Activated CD8-positive, alpha-beta T cell treated with anti-CD3 and anti-CD28 coated beads for 36 hours (primary cell): ENCODE measurements at regions of chr15 and their contacts with region 1.

Region 1: GRCh38 chr15:101201406-101202174 is 50.3 kb downstream of the CHSY1 start:
- DNase-seq: peak; percentile 44
- ATAC-seq: no peak
- H3K4me3 Mint-ChIP-seq: peak overlapping the region; percentile 19
- H3K27ac Mint-ChIP-seq: peak overlapping the region; percentile 96
- H3K4me1 Mint-ChIP-seq: peaks cover 92% of the 10 kb centered on the region
- H3K27me3 Mint-ChIP-seq: no peaks in the 10 kb centered on the region
- CTCF ChIP-seq: no peak

Region 2: DNA sequence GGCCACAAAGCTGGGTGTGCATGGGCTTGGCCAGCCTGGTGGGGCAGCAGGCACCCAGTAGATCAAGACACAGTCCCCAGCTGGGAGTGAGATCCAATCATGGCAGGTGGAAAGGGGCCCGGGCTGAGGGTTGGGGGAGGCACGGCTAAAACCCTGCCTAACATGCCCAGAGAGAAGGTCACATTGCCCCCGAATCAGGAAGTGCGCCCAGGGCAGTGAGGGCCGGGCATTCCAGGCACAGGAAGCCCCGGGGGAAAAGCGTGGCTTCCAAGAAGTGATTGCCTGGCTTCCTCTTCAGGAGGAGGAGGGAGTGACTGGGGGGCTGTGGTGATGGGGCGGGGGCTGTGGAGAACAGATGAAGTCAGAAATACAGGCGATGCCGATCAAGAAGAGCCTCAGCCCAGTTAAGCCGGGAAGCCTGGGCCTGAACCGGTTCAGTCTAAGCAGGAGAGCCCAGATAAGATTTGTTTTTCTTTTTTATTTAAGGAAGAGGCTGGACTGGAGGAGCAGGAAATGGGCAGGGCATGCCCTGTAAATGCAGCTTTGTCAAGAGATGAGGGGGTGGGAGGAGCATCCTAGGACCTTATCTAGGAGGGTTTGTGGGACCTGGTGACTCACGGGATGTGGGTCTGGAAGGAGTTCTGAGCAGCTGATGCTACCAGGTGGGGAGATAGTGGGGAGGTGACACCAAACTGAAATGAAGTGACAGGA is 33.7 kb before region 1 on chr15:
- CTCF ChIA-PET with region 1: interaction called, 3 read pairs
- POLR2A ChIA-PET with region 1: no interaction called
- intact Hi-C with region 1: loop called (anchors 5 kb)
- DNase-seq: peak; percentile 90
- ATAC-seq: peak; percentile 95
- H3K4me3 Mint-ChIP-seq: peak overlapping the region; percentile 58
- H3K27ac Mint-ChIP-seq: peak overlapping the region; percentile 86
- H3K4me1 Mint-ChIP-seq: peaks cover 26% of the 10 kb centered on the region
- H3K27me3 Mint-ChIP-seq: no peaks in the 10 kb centered on the region
- CTCF ChIP-seq: no peak

Region 3: GRCh38 chr15:101188637-101189408 is 12.8 kb before region 1 on chr15:
- CTCF ChIA-PET with region 1: interaction called, 13 read pairs
- POLR2A ChIA-PET with region 1: interaction called, 13 read pairs
- intact Hi-C with region 1: loop called (anchors 2 kb)
- DNase-seq: no peak
- ATAC-seq: peak; percentile 70
- H3K4me3 Mint-ChIP-seq: peak overlapping the region; percentile 18
- H3K27ac Mint-ChIP-seq: peak overlapping the region; percentile 84
- H3K4me1 Mint-ChIP-seq: peaks cover 90% of the 10 kb centered on the region
- H3K27me3 Mint-ChIP-seq: no peaks in the 10 kb centered on the region
- CTCF ChIP-seq: no peak

Region 4: DNA sequence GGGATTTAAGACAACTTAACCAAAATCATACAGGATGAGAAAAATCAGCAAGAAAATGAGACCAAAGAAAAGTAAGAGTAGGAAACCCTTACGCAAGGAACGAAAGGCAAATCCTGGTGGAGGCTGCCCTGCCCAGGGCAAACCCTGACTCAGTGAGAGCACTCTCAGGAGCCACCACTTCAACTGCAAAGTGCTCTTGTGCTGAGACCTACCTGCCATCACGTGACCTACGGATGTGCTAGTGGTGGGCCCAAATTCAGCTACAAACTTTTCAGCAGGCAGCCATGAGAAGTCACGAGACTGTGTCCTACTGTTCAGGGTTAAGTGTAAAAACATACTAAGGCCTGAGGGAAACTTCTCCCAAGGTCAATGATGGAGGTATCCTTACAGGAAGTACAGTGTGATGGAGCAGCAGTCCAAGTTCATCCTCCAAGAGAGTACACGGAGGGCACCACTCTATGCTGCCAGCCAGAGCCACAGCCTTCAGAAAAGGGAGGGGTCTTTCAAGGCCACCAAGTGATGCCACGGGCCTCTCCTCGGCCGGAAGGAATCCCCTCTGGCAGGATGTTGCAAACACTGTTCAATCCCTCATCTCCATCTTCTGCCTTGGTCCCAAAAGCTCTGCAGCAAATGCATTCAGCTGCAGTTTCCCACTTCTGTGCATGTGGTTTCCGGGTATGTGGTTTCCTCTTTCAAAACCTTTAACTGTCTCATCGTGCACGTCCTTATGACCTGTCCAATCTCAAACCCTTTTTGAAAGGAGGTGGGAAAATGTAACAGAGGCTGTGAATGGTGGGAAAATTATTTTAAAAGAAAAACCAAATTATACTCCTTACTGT is 40.8 kb after region 1 on chr15:
- CTCF ChIA-PET with region 1: interaction called, 11 read pairs
- POLR2A ChIA-PET with region 1: interaction called, 8 read pairs
- intact Hi-C with region 1: loop called (anchors 5 kb)
- DNase-seq: peak; percentile 82
- ATAC-seq: peak; percentile 76
- H3K4me3 Mint-ChIP-seq: peak overlapping the region; percentile 37
- H3K27ac Mint-ChIP-seq: peak overlapping the region; percentile 85
- H3K4me1 Mint-ChIP-seq: peaks cover 87% of the 10 kb centered on the region
- H3K27me3 Mint-ChIP-seq: no peaks in the 10 kb centered on the region
- CTCF ChIP-seq: no peak

Region 5: GRCh38 chr15:101251830-101252820 is 50.5 kb after region 1 on chr15 and contains the start of gene CHSY1:
- CTCF ChIA-PET with region 1: interaction called, 11 read pairs
- POLR2A ChIA-PET with region 1: interaction called, 17 read pairs
- intact Hi-C with region 1: no loop called
- DNase-seq: peak; percentile 91
- ATAC-seq: peak; percentile 75
- H3K4me3 Mint-ChIP-seq: peak within 1 kb of the TSS; percentile 85
- H3K27ac Mint-ChIP-seq: peak within 1 kb of the TSS; percentile 87
- H3K4me1 Mint-ChIP-seq: peaks cover 59% of the 10 kb centered on the region
- H3K27me3 Mint-ChIP-seq: no peaks in the 10 kb centered on the region
- CTCF ChIP-seq: no peak
- total RNA-seq, gene CHSY1: 57.9 to 58.3 TPM

Region 6: GRCh38 chr15:101568309-101568708 is 366.7 kb after region 1 on chr15:
- CTCF ChIA-PET with region 1: no interaction called
- POLR2A ChIA-PET with region 1: no interaction called
- intact Hi-C with region 1: no loop called
- DNase-seq: no peak
- ATAC-seq: no peak
- H3K4me3 Mint-ChIP-seq: no peak overlapping the region
- H3K27ac Mint-ChIP-seq: no peak overlapping the region
- H3K4me1 Mint-ChIP-seq: no peaks in the 10 kb centered on the region
- H3K27me3 Mint-ChIP-seq: peaks cover 14% of the 10 kb centered on the region
- CTCF ChIP-seq: no peak

Region 7: GRCh38 chr15:101807345-101807945 is 605.9 kb after region 1 on chr15:
- CTCF ChIA-PET with region 1: no interaction called
- POLR2A ChIA-PET with region 1: no interaction called
- intact Hi-C with region 1: no loop called
- DNase-seq: no peak
- ATAC-seq: no peak
- H3K4me3 Mint-ChIP-seq: no peak overlapping the region
- H3K27ac Mint-ChIP-seq: no peak overlapping the region
- H3K4me1 Mint-ChIP-seq: no peaks in the 10 kb centered on the region
- H3K27me3 Mint-ChIP-seq: peaks cover 26% of the 10 kb centered on the region
- CTCF ChIP-seq: no peak